Heart left ventricle (tissue), 16 donors: ENCODE measurements at regions of chrX and their contacts with region 1.

Region 1: DNA sequence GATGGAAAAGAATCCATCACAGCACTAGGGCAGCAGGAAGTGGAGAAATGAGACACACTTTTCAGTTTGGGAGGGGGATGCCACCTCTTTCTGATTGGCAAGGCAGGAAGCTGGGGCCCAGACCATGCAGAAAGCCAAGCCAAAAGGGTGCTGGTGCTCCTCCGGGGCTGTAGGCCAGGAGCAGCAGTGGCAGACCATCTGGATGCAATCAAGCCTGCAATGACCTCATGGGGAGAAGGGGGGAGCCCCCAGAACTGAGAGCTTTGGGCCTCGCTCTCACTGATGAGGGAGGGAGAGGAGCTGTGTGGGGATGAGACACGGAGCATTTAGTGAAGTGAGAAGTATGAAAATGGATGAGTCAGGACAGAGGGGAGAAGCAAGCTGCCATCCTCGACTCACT is 141.3 kb upstream of the NALF2 start:
- DNase-seq: peak in 1 of 5 donors; percentile 37
- ATAC-seq: peak in 3 of 4 donors; percentile 34 to 56 (median 42)
- H3K4me3 ChIP-seq: no peak overlapping the region
- H3K27ac ChIP-seq: no peak overlapping the region
- H3K4me1 ChIP-seq: peaks cover 0 to 15% (median 0%) of the 10 kb centered on the region in 12 donors
- H3K27me3 ChIP-seq: peaks cover 0 to 6% (median 0%) of the 10 kb centered on the region in 9 donors
- CTCF ChIP-seq: no peak
- POLR2A ChIP-seq: no peak

Region 2: DNA sequence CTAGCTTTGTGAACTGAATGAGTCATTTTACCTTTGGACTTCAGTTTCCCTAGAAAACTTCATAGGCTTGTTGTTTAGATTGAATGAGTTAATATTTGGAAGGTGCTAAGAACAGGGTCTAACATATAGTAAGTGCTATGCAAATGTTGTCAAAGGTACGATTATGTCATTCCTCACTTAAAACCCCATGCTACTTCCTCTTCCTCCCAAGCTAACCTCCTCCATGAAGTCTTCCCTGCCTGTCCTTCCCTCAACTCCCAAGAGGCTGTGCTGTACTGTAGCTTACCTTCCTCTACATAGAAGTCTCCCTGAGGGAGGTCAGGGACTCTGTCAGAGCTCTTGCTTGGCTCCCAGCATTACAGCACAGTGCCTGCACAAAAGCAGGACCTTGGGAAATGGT is 94.2 kb before region 1 on chrX:
- intact Hi-C with region 1: no loop called
- DNase-seq: no peak
- ATAC-seq: no peak
- H3K4me3 ChIP-seq: no peak overlapping the region
- H3K27ac ChIP-seq: no peak overlapping the region
- H3K4me1 ChIP-seq: no peaks in the 10 kb centered on the region
- H3K27me3 ChIP-seq: peaks cover 0 to 27% (median 0%) of the 10 kb centered on the region in 9 donors
- CTCF ChIP-seq: no peak
- POLR2A ChIP-seq: no peak

Region 3: DNA sequence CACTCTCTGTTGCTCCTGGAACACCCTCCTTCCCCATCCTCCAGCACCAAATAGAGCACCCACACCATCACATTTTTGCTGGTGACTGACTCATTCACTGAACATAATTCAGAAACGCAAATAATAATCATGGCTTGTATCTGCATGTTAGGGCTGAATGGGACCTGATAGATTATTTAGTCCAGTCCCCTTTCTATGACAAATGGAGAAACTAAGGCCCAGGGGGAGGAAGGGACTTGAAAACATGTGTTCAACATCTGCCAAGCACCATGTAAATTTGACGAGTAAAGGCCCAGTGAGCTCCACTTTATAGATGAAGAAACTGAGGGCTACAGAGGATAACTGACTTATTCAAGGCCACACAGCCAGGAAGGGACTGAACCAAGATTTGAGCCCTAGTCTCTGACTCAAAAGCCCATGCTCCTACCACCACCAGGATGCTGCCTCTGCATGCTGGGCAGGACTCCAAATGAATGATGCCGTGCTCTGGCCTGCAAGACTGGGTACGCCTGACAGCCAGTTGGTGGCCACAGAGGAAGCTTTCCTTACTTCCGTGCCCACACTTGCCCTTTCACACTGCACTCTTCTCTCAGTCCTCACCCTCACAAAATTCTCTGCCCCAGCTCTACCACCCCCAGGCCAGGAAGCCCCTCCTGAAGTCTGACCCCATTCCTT is 64.3 kb before region 1 on chrX:
- intact Hi-C with region 1: loop called in 1 of 10 experiments (anchors 10 kb)
- DNase-seq: peak in 1 of 5 donors; percentile 41
- ATAC-seq: peak in 1 of 4 donors; percentile 60
- H3K4me3 ChIP-seq: no peak overlapping the region
- H3K27ac ChIP-seq: no peak overlapping the region
- H3K4me1 ChIP-seq: peaks cover 0 to 8% (median 0%) of the 10 kb centered on the region in 12 donors
- H3K27me3 ChIP-seq: peaks cover 0 to 11% (median 0%) of the 10 kb centered on the region in 9 donors
- CTCF ChIP-seq: no peak
- POLR2A ChIP-seq: no peak